ENCODE measurements at regions of chr13 and their contacts with region 1.

Region 1: DNA sequence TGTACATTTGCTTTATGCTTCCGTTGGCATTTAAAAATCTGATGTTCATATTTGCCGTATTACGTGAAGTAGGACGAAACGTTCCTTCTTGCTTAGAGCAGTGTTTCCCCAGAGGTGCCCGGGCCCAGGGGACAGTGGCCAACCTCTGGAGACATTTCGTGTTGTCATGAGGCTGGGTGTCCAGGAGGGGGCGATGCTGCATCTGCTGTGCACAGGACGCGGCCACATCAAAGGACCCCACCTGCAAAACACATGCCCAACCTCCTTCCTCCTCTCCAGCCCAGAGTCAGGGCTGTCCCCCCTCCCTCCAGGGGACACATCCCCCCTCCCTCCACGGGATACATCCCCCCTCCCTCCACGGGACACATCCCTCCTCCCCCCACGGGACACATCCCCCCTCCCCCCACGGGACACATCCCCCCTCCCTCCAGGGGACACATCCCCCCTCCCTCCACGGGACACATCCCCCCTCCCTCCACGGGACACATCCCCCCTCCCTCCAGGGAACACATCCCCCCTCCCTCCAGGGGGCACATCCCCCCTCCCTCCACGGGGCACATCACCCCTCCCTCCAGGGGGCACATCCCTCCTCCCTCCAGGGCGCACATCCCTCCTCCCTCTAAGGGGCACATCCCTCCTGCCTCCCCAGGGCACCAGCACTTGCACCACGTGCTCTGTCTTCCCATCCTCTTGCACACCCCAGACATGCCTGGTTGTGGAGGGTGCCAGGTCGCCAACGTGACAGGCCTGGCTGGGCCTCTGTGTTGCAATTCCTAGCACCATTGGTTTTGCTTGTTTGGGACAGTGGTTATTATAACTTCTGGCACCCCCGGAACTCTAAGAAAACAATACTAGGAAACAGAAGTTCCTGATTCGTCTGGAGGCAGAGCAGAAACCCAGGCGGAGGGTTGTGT is 46.7 kb downstream of the GAS6 start:
- DNase-seq: peak; percentile 81 to 87
- ATAC-seq: peak; percentile 28 to 29
- H3K4me3 ChIP-seq: peak overlapping the region in 1 of 4 donors; percentile 13
- H3K27ac ChIP-seq: peak overlapping the region; percentile 68 to 97 (median 96)
- H3K4me1 ChIP-seq: peaks cover 33 to 37% of the 10 kb centered on the region in 2 donors
- H3K27me3 ChIP-seq: no peaks in the 10 kb centered on the region
- CTCF ChIP-seq: peak; percentile 90 to 93 (median 91)
- POLR2A ChIP-seq: no peak

Region 2: GRCh38 chr13:113607056-113607888 is 209.9 kb before region 1 on chr13:
- in situ Hi-C with region 1: no loop called
- intact Hi-C with region 1: no loop called
- DNase-seq: no peak
- ATAC-seq: no peak
- H3K4me3 ChIP-seq: no peak overlapping the region
- H3K27ac ChIP-seq: no peak overlapping the region
- H3K4me1 ChIP-seq: no peaks in the 10 kb centered on the region
- H3K27me3 ChIP-seq: no peaks in the 10 kb centered on the region
- CTCF ChIP-seq: no peak
- POLR2A ChIP-seq: no peak

Region 3: DNA sequence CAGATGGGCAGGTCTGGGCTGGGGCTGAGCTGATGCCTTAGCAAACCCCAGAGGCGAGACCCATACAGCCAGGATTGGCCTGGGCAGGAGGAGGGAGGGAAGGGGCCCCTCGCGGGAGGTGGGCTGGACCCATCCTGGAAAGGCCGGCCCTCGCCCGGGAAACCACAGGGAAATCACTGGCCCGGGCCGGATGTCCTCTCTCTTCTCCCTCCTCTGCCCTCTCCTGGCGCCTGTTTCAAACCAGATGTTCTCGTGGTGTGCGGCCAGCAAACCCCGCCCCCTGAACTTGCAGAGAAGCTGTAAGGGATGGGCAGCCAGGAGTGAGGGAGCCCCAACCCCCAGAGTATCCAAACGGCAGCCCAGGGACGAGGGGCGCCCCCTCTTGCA is 15.1 kb before region 1 on chr13:
- in situ Hi-C with region 1: no loop called
- intact Hi-C with region 1: no loop called
- DNase-seq: no peak
- ATAC-seq: no peak
- H3K4me3 ChIP-seq: no peak overlapping the region
- H3K27ac ChIP-seq: no peak overlapping the region
- H3K4me1 ChIP-seq: no peaks in the 10 kb centered on the region
- H3K27me3 ChIP-seq: no peaks in the 10 kb centered on the region
- CTCF ChIP-seq: no peak
- POLR2A ChIP-seq: no peak

Region 4: DNA sequence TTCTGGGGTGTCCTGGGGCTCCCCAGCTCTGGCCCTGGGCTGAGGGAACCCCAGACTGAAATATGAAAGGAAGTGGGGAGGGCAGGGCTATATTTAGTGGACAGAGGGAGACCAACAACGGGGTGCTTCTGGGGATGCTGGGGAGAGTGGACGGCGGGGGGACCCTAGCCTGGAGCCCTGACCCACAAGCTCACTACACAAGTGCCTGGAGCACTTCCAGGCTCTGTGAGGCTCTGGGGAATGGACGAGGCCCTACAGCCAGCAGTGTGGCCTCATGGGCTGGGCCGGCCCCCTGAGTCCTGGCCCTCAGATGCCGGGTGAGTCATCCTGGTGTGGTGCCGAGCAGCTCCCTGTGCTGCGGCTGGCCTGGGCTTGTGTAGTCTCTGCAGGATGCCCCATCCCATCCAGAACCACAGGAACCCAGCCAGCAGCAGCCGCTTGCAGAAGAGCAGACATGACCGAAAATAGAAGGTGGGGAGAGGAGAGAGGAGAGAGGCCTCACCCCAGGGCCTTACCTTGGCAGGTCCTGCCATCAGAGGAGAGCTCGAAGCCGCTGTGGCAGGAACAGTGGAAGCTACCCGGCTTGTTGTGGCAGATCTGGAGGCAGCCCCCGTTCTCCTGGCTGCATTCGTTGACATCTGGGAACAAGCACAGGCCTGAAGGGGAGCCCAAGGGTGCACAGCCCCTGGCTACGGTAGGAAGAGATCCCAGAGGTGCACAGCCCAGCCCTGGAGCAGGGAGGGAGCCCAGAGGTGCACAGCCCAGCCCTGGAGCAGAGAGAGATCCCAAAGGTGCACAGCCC is 20.6 kb after region 1 on chr13:
- in situ Hi-C with region 1: no loop called
- intact Hi-C with region 1: loop called (anchors 1 kb)
- DNase-seq: peak; percentile 96 to 99
- ATAC-seq: peak; percentile 87 to 90
- H3K4me3 ChIP-seq: peak overlapping the region; percentile 8 to 37 (median 15)
- H3K27ac ChIP-seq: peak overlapping the region; percentile 94 to 98 (median 96)
- H3K4me1 ChIP-seq: peaks cover 41 to 42% of the 10 kb centered on the region in 2 donors
- H3K27me3 ChIP-seq: no peaks in the 10 kb centered on the region
- CTCF ChIP-seq: no peak
- POLR2A ChIP-seq: peak; percentile 47 to 48

Region 5: DNA sequence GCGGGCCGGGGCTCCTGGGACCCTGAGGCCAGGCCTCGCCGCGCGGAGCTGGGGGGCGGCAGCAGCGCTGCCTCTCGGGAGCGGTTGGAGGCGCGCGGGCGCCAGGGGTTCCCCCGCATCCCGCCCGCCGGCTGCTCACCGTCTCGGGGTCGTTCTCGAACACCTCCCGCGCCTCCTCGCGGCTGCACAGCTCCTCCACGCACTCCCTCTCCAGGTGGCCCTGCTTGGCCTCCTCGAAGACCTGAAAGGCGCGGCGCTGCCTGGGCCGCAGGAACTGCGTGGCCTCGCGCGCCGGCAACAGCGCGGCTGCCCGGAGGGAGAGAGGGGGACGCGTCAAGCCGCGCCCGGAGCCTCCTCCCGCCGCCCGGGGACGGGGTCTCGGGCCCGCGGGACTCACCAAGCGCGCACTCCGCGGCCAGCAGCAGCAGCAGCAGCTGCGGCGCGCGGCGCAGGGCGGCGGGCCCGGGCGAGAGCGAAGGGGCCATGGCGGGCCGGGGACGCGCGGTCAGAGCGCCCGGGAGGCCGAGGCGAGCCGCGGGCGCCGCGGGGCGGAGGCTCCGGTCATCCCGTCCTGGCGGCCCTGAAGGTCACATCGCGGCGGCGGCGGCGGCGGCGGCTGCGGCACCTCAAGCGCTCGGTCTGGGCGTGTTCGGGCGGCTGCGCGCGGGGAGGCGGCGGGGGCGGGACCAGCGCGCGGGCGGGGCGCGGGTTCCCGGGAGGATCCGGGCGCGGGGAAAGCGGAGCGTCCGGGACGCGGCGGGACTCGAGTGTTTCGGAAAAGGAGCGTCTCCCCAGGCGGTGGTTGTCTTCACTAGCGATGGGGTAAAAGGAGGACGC is 46.5 kb after region 1 on chr13 and contains the start of gene GAS6:
- in situ Hi-C with region 1: loop called in 1 of 4 experiments (anchors 5 kb)
- intact Hi-C with region 1: loop called (anchors 1 kb)
- DNase-seq: peak; percentile 62 to 76
- ATAC-seq: peak; percentile 80 to 81
- H3K4me3 ChIP-seq: peak within 1 kb of the TSS; percentile 54 to 84 (median 71)
- H3K27ac ChIP-seq: peak within 1 kb of the TSS; percentile 89 to 93 (median 90)
- H3K4me1 ChIP-seq: peaks cover 5 to 22% of the 10 kb centered on the region in 2 donors
- H3K27me3 ChIP-seq: no peaks in the 10 kb centered on the region
- CTCF ChIP-seq: peak in 3 of 5 experiments; percentile 27 to 39 (median 35)
- POLR2A ChIP-seq: peak; percentile 76 to 78
- total RNA-seq, gene GAS6: 68.6 to 122 (median 86.3) TPM

Region 6: DNA sequence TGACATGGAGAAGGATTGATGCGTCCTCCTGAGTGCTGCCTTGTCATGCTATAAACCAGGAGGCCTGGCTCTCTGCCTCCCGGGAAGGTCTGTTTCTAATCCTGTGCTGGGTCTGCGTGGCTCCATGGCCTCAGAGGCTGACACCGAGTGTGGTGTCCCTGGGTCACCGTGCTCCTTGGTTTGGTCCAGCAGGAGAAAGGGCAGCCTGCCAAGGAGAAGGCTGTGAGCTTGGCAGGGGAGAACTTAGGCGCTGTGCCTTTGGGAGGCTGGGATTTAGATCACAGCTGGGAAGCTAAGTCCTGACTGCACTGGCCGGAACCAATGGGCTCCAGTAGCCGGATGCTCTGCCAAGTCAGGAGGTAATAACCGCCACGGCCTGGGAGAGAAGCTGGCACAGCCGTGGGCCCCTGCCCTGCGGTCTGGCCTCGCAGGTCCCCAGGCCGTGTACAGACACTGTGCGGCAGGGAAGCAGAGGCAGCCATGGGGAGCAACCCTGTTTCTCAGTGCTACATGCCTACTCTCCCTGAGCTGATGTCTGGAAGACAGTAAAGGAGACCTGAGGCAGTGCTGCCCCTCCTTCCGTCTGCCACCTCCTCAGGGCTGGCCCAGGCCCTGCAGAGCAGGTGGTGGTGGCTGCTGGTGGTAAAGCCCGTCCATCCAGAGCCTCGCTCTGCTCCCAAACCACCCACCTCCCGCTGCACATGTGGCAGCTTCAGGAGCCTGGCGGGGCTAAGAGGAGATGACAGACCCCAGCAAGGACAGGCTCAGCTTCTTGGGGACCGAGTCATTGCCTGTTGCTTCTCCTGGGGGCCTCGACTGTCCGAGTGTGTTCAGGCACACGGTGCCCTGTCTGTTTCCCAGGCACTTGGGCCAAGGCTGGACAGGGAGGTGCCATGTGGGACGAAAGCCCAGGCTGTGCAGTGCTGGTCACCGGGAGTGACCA is 111.8 kb after region 1 on chr13:
- in situ Hi-C with region 1: loop called in 1 of 4 experiments (anchors 10 kb)
- intact Hi-C with region 1: loop called (anchors 5 kb)
- DNase-seq: peak; percentile 95 to 99
- ATAC-seq: peak; percentile 81 to 82
- H3K4me3 ChIP-seq: peak overlapping the region in 2 of 4 donors; percentile 5 to 28
- H3K27ac ChIP-seq: peak overlapping the region; percentile 84 to 90 (median 87)
- H3K4me1 ChIP-seq: peaks cover 38 to 40% of the 10 kb centered on the region in 2 donors
- H3K27me3 ChIP-seq: no peaks in the 10 kb centered on the region
- CTCF ChIP-seq: no peak
- POLR2A ChIP-seq: peak in 1 of 2 donors; percentile 8

Region 7: DNA sequence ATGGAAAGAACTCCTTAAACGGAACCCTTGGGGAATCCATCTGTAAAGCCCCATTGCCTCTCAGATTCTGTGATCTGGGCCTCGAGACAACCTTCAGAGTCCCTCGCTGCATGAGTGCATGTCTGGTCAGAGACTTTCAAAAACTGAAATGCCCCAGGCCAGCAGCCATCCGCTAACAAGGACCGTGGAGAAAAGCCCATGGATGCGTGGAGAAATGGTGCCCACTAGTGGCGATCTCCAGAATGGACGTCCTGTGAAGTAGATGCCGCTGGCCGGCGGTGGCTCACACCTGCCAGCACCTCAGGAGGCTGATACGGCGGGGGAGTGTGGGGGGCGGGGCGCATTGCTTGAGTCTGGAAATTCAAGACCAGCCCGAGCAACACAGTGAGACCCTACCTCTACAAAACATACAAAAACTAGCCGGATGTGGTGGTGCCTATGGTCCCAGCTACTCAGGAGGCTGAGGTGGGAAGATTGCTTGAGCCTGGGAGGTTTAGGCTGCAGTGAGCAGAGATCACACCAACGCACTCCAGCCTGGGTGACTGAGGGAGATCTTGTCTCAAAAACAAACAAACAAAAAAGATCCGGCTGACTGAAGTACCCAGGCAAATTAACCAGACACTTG is 409.6 kb after region 1 on chr13:
- in situ Hi-C with region 1: no loop called
- intact Hi-C with region 1: loop called (anchors 2 kb)
- DNase-seq: peak; percentile 67 to 82
- ATAC-seq: peak; percentile 89 to 98
- H3K4me3 ChIP-seq: no peak overlapping the region
- H3K27ac ChIP-seq: no peak overlapping the region
- H3K4me1 ChIP-seq: peaks cover 0 to 3% of the 10 kb centered on the region in 2 donors
- H3K27me3 ChIP-seq: peaks cover 0 to 10% (median 0%) of the 10 kb centered on the region in 3 donors
- CTCF ChIP-seq: peak; percentile 93 to 98 (median 96)
- POLR2A ChIP-seq: no peak

Measured in gastrocnemius medialis (tissue), 4 donors.